Activated CD4-positive, alpha-beta memory T cell treated with anti-CD3 and anti-CD28 coated beads, Interleukin-2, amount 10 ng/mL, durations not matched to agents 7 days and 5 days (primary cell): ENCODE measurements at regions of chr10 and their contacts with region 1.

Region 1: DNA sequence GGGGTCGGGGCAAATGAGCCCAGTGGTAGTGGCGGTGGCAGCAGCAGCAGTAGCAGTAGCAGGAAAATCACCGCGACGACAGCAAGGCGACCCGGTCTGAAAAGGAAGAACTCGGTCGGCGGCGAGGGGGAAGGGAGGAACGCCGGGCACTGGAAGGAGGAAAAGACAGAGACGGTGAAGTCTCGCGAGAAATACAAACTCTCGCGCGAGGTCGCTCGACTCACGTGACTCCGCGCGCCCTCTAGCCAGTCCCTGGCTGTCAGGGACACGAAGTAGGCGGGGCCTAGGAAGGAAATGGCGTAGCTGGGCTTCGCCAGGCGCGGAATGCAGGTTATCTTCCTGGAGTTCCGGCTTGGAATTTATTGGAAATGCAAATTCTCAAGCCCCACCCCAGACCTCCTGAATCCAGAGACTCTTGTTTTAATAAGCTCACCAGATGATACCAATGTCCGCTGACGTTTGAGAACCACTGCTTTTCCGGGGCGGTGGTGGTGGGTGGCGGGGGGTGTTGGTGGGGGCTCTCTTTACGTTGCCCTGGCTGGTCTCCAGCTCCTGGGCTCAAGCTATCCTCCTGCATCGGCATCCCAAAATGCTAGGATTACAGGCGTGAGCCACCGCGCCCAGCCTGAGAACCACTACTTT is at the start of gene SMNDC1:
- DNase-seq: peak; percentile 98
- H3K4me3 Mint-ChIP-seq: peak within 1 kb of the TSS; percentile 97
- H3K27ac Mint-ChIP-seq: peak within 1 kb of the TSS; percentile 96
- H3K4me1 Mint-ChIP-seq: peaks cover 55% of the 10 kb centered on the region
- H3K27me3 Mint-ChIP-seq: no peaks in the 10 kb centered on the region
- total RNA-seq, gene SMNDC1: 40.8 to 45.6 TPM

Region 2: DNA sequence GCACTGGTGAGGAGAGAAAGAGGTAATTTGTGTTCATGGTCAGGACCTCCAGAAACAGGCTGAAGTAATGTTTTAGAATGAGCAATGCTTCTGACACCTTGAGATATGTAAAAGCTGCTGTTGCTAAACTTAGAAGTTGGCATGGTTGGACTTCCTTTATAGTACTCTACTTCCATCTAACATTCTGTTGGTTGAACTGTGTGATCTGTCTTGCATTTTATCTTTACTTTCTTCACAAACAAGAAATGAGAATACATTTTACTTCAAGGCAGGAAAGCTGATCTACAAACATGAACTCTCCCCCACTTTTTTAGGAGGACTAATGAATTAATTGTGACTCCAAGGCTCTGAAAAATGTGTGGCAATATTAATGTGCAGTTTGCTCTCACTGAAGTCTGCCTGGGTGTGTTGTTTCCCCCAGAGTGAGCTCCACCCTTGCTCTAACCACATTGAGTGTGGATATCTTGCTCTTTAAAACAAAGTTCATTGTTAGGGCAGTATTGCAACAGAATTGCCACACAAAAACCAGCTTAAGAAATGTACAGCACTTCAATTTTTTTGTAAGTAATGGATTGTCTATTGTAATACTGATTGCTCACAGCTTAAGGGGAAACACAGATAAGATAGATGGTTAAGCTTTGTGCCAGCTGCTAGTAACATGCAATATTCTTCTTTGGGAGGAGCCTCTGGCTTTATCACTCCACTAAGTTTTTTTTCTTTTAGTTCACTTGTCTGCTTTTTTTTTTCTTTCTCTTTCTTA is 228.2 kb before region 1 on chr10:
- CTCF ChIA-PET with region 1: no interaction called
- POLR2A ChIA-PET with region 1: no interaction called
- DNase-seq: peak; percentile 54
- H3K4me3 Mint-ChIP-seq: peak overlapping the region; percentile 89
- H3K27ac Mint-ChIP-seq: peak overlapping the region; percentile 99
- H3K4me1 Mint-ChIP-seq: peaks cover 81% of the 10 kb centered on the region
- H3K27me3 Mint-ChIP-seq: no peaks in the 10 kb centered on the region

Region 3: GRCh38 chr10:110502851-110503301 is 198.0 kb after region 1 on chr10:
- CTCF ChIA-PET with region 1: interaction called, 43 read pairs
- POLR2A ChIA-PET with region 1: interaction called, 49 read pairs
- DNase-seq: no peak
- H3K4me3 Mint-ChIP-seq: peak overlapping the region; percentile 99
- H3K27ac Mint-ChIP-seq: peak overlapping the region; percentile 96
- H3K4me1 Mint-ChIP-seq: peaks cover 78% of the 10 kb centered on the region
- H3K27me3 Mint-ChIP-seq: no peaks in the 10 kb centered on the region

Region 4: DNA sequence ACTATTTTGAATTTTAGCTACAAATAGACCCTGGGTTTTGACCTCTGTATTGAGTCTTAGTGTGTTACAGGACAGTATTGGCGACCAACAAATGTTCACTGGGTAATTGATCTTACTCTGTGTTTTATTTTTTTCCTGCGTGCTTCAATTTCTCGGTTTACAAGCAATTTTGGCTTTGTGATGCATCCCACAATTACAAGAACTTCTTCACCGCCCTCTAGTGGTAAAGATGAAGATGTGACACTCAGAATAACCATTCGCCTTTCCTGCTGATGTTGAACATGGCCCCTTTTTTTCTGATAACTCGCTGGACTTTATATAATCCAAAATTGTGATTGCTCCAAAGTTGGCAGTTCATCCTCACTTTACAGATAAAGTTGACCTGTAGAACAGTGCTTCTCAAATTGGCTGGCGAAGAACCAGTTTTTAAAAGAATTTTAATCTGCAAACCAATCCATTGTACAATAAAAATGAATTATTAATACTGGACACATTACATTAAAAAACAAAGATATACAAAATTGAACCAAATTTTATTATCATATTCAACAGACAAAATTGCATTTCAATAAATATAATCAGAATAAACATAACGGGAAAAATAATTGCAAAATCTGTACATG is 242.3 kb after region 1 on chr10:
- CTCF ChIA-PET with region 1: interaction called, 67 read pairs
- POLR2A ChIA-PET with region 1: interaction called, 12 read pairs
- DNase-seq: no peak
- H3K4me3 Mint-ChIP-seq: no peak overlapping the region
- H3K27ac Mint-ChIP-seq: no peak overlapping the region
- H3K4me1 Mint-ChIP-seq: peaks cover 10% of the 10 kb centered on the region
- H3K27me3 Mint-ChIP-seq: peaks cover 25% of the 10 kb centered on the region

Region 5: DNA sequence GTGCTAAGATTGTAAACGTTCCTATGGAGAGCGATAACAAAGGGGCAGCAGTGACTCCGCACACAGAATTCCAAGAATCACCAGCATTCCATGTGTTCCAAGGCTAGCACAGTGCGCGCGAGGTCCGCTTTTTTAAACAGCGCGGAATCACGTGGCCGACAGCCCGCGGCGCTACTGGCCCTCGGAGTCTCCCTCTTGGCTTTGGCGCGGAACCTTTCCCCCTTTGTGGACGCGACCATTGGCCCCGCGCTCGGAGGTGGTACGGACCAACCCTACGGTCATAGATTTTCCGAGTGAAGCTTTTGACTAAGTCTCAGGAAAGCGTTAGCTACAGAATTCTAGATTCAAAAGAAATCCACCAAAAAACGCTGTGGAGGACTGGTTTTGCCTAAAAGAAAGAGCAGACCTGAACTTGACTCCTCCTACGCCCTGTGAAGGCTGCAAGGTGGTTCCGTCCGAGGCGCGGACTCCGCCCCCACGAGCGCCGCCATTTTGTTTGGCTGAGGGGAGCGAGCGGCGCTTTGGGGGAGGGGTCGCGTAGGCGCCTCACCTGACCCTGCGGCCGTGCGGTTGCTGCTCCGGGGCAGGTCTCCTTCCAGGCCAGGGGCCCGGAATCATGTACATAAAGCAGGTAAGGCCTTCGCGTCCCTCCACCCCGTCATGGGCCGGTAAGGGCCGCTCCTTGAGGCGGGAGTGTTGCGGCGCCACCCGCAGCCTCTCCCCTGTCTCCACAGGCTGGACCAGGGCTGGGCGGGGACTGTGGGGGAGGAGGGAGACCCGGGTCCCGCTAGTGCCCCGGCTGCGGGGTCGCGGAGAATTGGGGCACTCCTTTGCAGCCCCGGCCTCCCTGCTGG is 262.5 kb after region 1 on chr10 and contains the start of gene SMC3:
- CTCF ChIA-PET with region 1: interaction called, 20 read pairs
- POLR2A ChIA-PET with region 1: interaction called, 51 read pairs
- DNase-seq: peak; percentile 92
- H3K4me3 Mint-ChIP-seq: peak within 1 kb of the TSS; percentile 95
- H3K27ac Mint-ChIP-seq: peak within 1 kb of the TSS; percentile 95
- H3K4me1 Mint-ChIP-seq: peaks cover 38% of the 10 kb centered on the region
- H3K27me3 Mint-ChIP-seq: peaks cover 1% of the 10 kb centered on the region
- total RNA-seq, gene SMC3: 81.0 to 83.0 TPM

Region 6: GRCh38 chr10:110600487-110601101 is 295.7 kb after region 1 on chr10:
- CTCF ChIA-PET with region 1: interaction called, 56 read pairs
- POLR2A ChIA-PET with region 1: interaction called, 5 read pairs
- DNase-seq: peak; percentile 37
- H3K4me3 Mint-ChIP-seq: no peak overlapping the region
- H3K27ac Mint-ChIP-seq: no peak overlapping the region
- H3K4me1 Mint-ChIP-seq: no peaks in the 10 kb centered on the region
- H3K27me3 Mint-ChIP-seq: no peaks in the 10 kb centered on the region